ENCODE measurements at regions of chr2 and their contacts with region 1.

Region 1: DNA sequence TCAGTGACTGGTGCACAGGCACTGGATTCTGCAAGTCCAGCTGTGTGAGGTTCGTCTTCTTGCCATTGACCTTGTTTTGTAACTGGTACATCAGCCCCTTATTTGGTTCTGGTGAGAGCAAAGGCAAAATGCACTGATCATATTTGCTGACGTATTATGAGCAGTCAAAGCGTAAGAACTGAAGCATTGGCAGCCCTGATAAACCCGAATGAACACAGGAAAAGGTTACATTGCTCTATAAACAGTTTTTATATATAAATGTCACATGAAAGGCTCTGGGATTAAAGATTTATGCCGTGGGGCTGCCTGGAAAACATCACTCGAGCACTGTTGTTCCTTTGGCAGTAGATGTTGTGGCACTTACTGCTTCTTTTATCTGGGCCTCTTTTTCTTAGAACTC is 167.9 kb downstream of the IRS1 start:
- DNase-seq: no peak
- H3K4me3 ChIP-seq: no peak overlapping the region
- CTCF ChIP-seq: no peak
- POLR2A ChIP-seq: no peak

Region 2: DNA sequence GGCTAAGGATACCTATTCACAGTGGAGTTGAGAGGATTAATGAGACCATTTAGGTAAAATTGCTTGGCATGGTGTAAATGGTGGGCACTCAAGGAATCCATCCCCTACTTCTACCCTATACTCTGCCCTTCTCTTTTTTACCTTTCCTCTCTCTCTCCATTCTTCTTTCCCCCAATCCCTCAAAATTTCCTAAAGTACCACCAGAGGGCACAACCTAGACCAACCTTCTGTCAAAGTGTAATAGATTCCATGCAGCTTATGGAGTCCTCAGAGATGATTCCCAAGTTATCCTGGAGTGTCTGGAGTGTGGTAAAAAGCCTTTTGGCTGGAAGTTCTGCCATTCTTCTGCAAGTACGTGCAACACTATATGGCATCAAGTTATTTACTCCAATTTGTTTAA is 1882.5 kb before region 1 on chr2:
- intact Hi-C with region 1: loop called (anchors 5 kb)
- DNase-seq: no peak
- H3K4me3 ChIP-seq: no peak overlapping the region
- CTCF ChIP-seq: no peak
- POLR2A ChIP-seq: no peak

Region 3: DNA sequence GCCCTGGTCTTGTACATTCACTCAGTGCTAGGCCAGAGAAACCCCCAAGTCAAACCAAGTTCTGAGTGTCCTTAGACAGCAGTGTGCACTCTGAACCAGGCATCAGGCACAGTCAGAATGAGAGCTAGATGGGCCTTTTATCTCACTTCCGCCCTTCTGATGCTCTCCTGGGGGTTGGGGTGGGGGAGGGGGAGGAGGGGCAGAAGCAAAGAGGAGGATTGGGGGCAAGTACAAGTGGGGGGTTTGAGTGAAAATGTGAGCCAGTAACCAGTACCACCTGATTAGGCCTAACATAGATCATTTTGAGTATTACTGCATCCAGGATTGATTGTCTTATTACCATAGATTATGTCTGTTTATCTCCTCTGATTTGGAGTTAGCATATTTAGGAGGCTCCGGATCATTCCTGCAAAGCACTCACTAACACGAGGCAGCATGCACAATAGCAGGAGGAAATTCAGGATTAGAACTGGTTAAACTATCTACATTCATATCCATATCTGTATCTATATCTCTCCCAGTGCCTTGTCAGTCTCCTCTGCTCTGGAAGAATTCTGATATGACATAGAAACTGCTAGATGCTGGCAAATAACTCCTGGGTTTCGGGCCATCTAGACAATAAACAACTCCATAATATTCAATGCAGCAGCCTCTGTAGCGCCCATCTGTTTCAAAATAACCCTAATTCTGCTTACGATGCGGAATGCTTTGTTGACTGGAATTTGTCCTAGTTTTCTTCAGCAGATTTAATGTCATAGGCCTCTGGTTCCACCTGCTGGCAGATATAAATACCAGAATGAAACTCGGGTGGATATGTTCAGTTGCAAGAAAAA is 353.3 kb after region 1 on chr2:
- intact Hi-C with region 1: no loop called
- DNase-seq: peak in 1 of 2 donors; percentile 70
- H3K4me3 ChIP-seq: no peak overlapping the region
- CTCF ChIP-seq: peak in 1 of 3 donors; percentile 38
- POLR2A ChIP-seq: no peak